ENCODE measurements at regions of chr17 and their contacts with region 1.

Region 1: GRCh38 chr17:75289115-75289831 is at the start of gene SLC25A19:
- DNase-seq: peak; percentile 98
- ATAC-seq: peak; percentile 84
- H3K4me3 ChIP-seq: peak within 1 kb of the TSS; percentile 77 to 88 (median 85)
- H3K4me3 Mint-ChIP-seq: peak within 1 kb of the TSS; percentile 98
- H3K27ac ChIP-seq: peak within 1 kb of the TSS; percentile 90 to 98
- H3K27ac Mint-ChIP-seq: peak within 1 kb of the TSS; percentile 100
- H3K4me1 ChIP-seq: peaks cover 23 to 44% of the 10 kb centered on the region in 2 donors
- H3K4me1 Mint-ChIP-seq: peaks cover 37% of the 10 kb centered on the region
- H3K27me3 ChIP-seq: no peaks in the 10 kb centered on the region
- H3K27me3 Mint-ChIP-seq: no peaks in the 10 kb centered on the region
- CTCF ChIP-seq: no peak
- total RNA-seq, gene SLC25A19: 46.4 and 52.3 TPM in 2 replicates

Region 2: GRCh38 chr17:75261336-75262111 is 27.7 kb before region 1 on chr17 and contains the starts of genes GGA3 and MRPS7:
- CTCF ChIA-PET with region 1: interaction called, 9 read pairs
- POLR2A ChIA-PET with region 1: interaction called, 13 read pairs
- intact Hi-C with region 1: loop called (anchors 1 kb)
- DNase-seq: peak; percentile 98
- ATAC-seq: peak; percentile 96
- H3K4me3 ChIP-seq: peak within 1 kb of the TSS; percentile 79 to 96 (median 95)
- H3K4me3 Mint-ChIP-seq: peak within 1 kb of the TSS; percentile 97
- H3K27ac ChIP-seq: peak within 1 kb of the TSS; percentile 95 to 99
- H3K27ac Mint-ChIP-seq: peak within 1 kb of the TSS; percentile 100
- H3K4me1 ChIP-seq: peaks cover 25% of the 10 kb centered on the region in 2 donors
- H3K4me1 Mint-ChIP-seq: peaks cover 52% of the 10 kb centered on the region
- H3K27me3 ChIP-seq: no peaks in the 10 kb centered on the region
- H3K27me3 Mint-ChIP-seq: no peaks in the 10 kb centered on the region
- CTCF ChIP-seq: no peak
- total RNA-seq, gene GGA3: 134 and 135 TPM in 2 replicates
- total RNA-seq, gene MRPS7: 37.2 and 42.6 TPM in 2 replicates

Region 3: GRCh38 chr17:75319904-75320691 is 30.8 kb after region 1 on chr17:
- CTCF ChIA-PET with region 1: interaction called, 79 read pairs
- POLR2A ChIA-PET with region 1: interaction called, 25 read pairs
- intact Hi-C with region 1: loop called (anchors 1 kb)
- DNase-seq: peak; percentile 57
- ATAC-seq: peak; percentile 59
- H3K4me3 ChIP-seq: no peak overlapping the region
- H3K4me3 Mint-ChIP-seq: peak overlapping the region; percentile 77
- H3K27ac ChIP-seq: peak overlapping the region; percentile 71 to 81
- H3K27ac Mint-ChIP-seq: peak overlapping the region; percentile 92
- H3K4me1 ChIP-seq: peaks cover 39 to 73% of the 10 kb centered on the region in 2 donors
- H3K4me1 Mint-ChIP-seq: peaks cover 64% of the 10 kb centered on the region
- H3K27me3 ChIP-seq: no peaks in the 10 kb centered on the region
- H3K27me3 Mint-ChIP-seq: no peaks in the 10 kb centered on the region
- CTCF ChIP-seq: no peak

Region 4: GRCh38 chr17:75400326-75400939 is 111.2 kb after region 1 on chr17:
- CTCF ChIA-PET with region 1: interaction called, 20 read pairs
- POLR2A ChIA-PET with region 1: interaction called, 12 read pairs
- intact Hi-C with region 1: loop called (anchors 1 kb)
- DNase-seq: no peak
- ATAC-seq: no peak
- H3K4me3 ChIP-seq: peak overlapping the region in 1 of 5 experiments; percentile 29
- H3K4me3 Mint-ChIP-seq: peak overlapping the region; percentile 67
- H3K27ac ChIP-seq: peak overlapping the region in 1 of 2 donors; percentile 28
- H3K27ac Mint-ChIP-seq: peak overlapping the region; percentile 37
- H3K4me1 ChIP-seq: peaks cover 53 to 82% of the 10 kb centered on the region in 2 donors
- H3K4me1 Mint-ChIP-seq: peaks cover 63% of the 10 kb centered on the region
- H3K27me3 ChIP-seq: no peaks in the 10 kb centered on the region
- H3K27me3 Mint-ChIP-seq: no peaks in the 10 kb centered on the region
- CTCF ChIP-seq: no peak

Region 5: DNA sequence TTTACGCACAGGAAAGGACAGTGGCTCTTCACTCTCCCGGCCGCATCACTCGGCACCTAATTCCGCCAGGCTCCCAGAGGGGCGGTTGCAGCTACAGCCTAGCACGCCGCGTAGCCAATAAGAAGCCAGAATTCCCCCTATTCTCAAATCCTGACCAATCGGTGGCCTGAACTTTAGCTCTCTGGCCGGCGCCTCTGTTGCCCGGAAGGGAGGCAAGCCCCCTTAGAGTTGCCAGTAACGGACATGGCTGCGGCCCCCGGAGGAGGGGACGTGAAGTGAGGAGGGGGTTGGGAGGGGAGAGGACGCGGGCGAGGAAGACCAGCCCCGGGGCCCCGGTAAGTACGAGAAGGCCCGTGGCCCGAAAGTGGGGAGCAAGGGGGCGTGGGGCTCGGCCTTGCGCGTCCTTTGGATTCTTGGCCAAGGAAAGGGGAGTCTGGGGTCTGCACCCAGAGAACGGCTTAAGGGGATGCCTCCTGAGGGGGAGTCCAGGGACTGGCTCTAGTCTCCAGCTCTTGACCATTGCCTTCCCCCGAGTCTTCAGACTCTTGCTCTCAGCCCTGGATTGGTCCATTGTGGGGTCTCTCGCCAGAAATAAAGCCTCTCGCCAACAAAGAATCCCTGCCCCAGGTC is 167.3 kb after region 1 on chr17 and contains the start of gene TMEM94:
- CTCF ChIA-PET with region 1: interaction called, 6 read pairs
- POLR2A ChIA-PET with region 1: interaction called, 4 read pairs
- intact Hi-C with region 1: loop called (anchors 1 kb)
- DNase-seq: peak; percentile 97
- ATAC-seq: peak; percentile 98
- H3K4me3 ChIP-seq: peak within 1 kb of the TSS; percentile 75 to 99 (median 84)
- H3K4me3 Mint-ChIP-seq: peak within 1 kb of the TSS; percentile 96
- H3K27ac ChIP-seq: peak within 1 kb of the TSS; percentile 60 to 79
- H3K27ac Mint-ChIP-seq: peak within 1 kb of the TSS; percentile 88
- H3K4me1 ChIP-seq: peaks cover 14 to 20% of the 10 kb centered on the region in 2 donors
- H3K4me1 Mint-ChIP-seq: peaks cover 42% of the 10 kb centered on the region
- H3K27me3 ChIP-seq: no peaks in the 10 kb centered on the region
- H3K27me3 Mint-ChIP-seq: no peaks in the 10 kb centered on the region
- CTCF ChIP-seq: no peak
- total RNA-seq, gene TMEM94: 112 and 139 TPM in 2 replicates

Region 6: GRCh38 chr17:75589012-75589918 is 300.0 kb after region 1 on chr17:
- CTCF ChIA-PET with region 1: interaction called, 4 read pairs
- POLR2A ChIA-PET with region 1: no interaction called
- intact Hi-C with region 1: loop called (anchors 2 kb)
- DNase-seq: peak; percentile 95
- ATAC-seq: peak; percentile 84
- H3K4me3 ChIP-seq: peak overlapping the region in 4 of 5 experiments; percentile 80 to 95 (median 84)
- H3K4me3 Mint-ChIP-seq: peak overlapping the region; percentile 86
- H3K27ac ChIP-seq: peak overlapping the region; percentile 80 to 89
- H3K27ac Mint-ChIP-seq: peak overlapping the region; percentile 81
- H3K4me1 ChIP-seq: peaks cover 4 to 20% of the 10 kb centered on the region in 2 donors
- H3K4me1 Mint-ChIP-seq: peaks cover 19% of the 10 kb centered on the region
- H3K27me3 ChIP-seq: no peaks in the 10 kb centered on the region
- H3K27me3 Mint-ChIP-seq: no peaks in the 10 kb centered on the region
- CTCF ChIP-seq: peak; percentile 59